ENCODE measurements at regions of chr1 and their contacts with region 1.

Region 1: DNA sequence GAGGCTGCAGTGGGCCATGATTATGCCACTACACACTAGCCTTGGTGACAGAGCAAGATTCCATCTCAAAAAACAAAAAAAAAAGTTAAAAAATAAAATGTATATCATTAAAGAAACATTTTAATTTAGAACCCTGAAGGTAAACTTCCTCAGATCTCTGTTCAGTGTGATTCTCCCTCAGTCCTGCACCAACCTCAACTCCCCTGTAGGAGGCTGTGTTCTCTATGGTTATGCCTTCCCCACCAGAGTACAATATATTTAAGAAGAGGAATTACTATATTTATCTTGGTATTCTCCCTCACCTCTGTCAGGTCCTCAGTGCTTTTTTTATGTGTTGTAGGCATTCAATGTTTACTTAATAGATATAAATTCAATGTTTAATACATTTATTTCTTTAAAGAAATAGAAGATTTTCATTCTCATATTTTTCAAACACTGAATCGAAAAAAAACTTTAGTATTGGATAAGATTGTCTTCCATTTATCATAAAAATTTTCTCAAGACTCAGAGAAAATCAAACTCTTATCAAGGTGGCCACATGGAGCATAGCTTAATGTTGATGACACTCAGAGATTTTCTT is 4.8 kb upstream of the LRRC8B start:
- DNase-seq: no peak
- ATAC-seq: peak; percentile 45
- H3K4me3 ChIP-seq: no peak overlapping the region
- H3K27ac ChIP-seq: no peak overlapping the region
- H3K4me1 ChIP-seq: no peaks in the 10 kb centered on the region
- H3K27me3 ChIP-seq: no peaks in the 10 kb centered on the region
- CTCF ChIP-seq: peak; percentile 74

Region 2: DNA sequence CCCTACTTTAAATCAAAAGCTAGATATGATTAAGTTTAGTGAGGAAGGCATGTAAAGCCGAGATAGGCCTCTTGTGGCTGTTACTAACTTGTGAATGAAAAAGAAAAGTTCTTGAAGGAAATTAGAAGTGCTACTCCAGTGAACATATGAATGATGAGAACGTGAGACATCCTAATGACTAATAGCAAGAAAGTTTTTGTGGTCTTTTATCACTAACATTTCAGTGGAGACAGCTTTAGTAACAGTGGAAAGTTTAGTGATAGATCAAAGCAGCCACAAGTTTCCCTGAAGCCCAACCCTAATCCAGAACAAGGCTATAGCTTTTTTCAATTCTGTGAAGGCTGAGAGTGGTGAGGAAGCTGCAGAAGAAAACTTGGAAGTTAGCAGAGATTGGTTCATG is 68.9 kb before region 1 on chr1:
- intact Hi-C with region 1: no loop called
- DNase-seq: no peak
- ATAC-seq: no peak
- H3K4me3 ChIP-seq: no peak overlapping the region
- H3K27ac ChIP-seq: no peak overlapping the region
- H3K4me1 ChIP-seq: no peaks in the 10 kb centered on the region
- H3K27me3 ChIP-seq: no peaks in the 10 kb centered on the region
- CTCF ChIP-seq: no peak

Region 3: DNA sequence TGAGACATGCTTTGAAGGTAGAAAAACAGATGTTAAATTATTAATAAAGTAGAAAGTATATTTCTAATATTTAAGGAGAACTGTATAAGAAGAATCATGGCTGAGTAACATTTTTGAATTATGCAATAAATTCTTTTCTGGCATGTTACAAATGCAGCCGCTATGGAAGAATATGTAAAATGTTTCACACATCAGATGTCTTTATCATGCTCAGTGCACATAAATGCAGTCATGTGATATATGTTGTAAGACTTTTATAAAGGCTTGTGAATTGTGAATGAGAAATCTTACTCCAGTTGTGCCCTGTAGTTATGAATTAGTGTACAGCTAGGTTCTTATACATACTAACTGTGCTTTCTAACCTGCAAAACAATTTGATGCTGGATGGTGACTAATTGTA is 58.3 kb after region 1 on chr1:
- intact Hi-C with region 1: loop called (anchors 10 kb)
- DNase-seq: no peak
- ATAC-seq: no peak
- H3K4me3 ChIP-seq: no peak overlapping the region
- H3K27ac ChIP-seq: no peak overlapping the region
- H3K4me1 ChIP-seq: no peaks in the 10 kb centered on the region
- H3K27me3 ChIP-seq: no peaks in the 10 kb centered on the region
- CTCF ChIP-seq: no peak